ENCODE measurements at regions of chr11 and their contacts with region 1.

Region 1: GRCh38 chr11:13772223-13773046 is 104.0 kb downstream of the FAR1 start:
- DNase-seq: peak; percentile 12 to 68
- H3K4me3 ChIP-seq: no peak overlapping the region
- H3K27ac ChIP-seq: no peak overlapping the region
- H3K4me1 ChIP-seq: no peaks in the 10 kb centered on the region
- H3K27me3 ChIP-seq: no peaks in the 10 kb centered on the region
- CTCF ChIP-seq: peak; percentile 74

Region 2: GRCh38 chr11:13717331-13717730 is 55.1 kb before region 1 on chr11:
- CTCF ChIA-PET with region 1: no interaction called
- POLR2A ChIA-PET with region 1: no interaction called
- intact Hi-C with region 1: no loop called
- DNase-seq: peak; percentile 13 to 37
- H3K4me3 ChIP-seq: no peak overlapping the region
- H3K27ac ChIP-seq: no peak overlapping the region
- H3K4me1 ChIP-seq: no peaks in the 10 kb centered on the region
- H3K27me3 ChIP-seq: no peaks in the 10 kb centered on the region
- CTCF ChIP-seq: no peak

Region 3: GRCh38 chr11:13745165-13745564 is 27.3 kb before region 1 on chr11:
- CTCF ChIA-PET with region 1: interaction called, 12 read pairs
- POLR2A ChIA-PET with region 1: no interaction called
- intact Hi-C with region 1: no loop called
- DNase-seq: no peak
- H3K4me3 ChIP-seq: no peak overlapping the region
- H3K27ac ChIP-seq: no peak overlapping the region
- H3K4me1 ChIP-seq: no peaks in the 10 kb centered on the region
- H3K27me3 ChIP-seq: no peaks in the 10 kb centered on the region
- CTCF ChIP-seq: no peak

Region 4: DNA sequence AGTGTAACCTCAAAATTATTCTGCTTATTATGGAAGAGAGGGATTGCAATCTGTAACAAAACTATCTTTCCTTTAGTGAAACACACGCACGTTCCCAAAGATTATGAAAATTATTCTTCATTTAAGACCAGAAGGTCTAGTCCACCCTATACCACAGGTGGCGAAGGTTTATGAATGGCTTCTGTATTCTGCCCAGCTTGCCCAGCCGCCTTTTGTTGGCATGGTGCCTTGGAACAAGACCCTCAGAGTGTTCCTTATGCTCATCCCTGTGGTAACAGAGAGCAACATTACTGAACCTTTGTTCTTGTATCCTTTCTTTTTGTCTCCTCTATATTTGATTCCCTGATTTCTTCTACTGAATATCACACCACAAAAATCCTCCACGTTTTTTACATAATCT is 12.4 kb after region 1 on chr11:
- CTCF ChIA-PET with region 1: no interaction called
- POLR2A ChIA-PET with region 1: no interaction called
- intact Hi-C with region 1: no loop called
- DNase-seq: no peak
- H3K4me3 ChIP-seq: no peak overlapping the region
- H3K27ac ChIP-seq: no peak overlapping the region
- H3K4me1 ChIP-seq: no peaks in the 10 kb centered on the region
- H3K27me3 ChIP-seq: no peaks in the 10 kb centered on the region
- CTCF ChIP-seq: no peak

Region 5: DNA sequence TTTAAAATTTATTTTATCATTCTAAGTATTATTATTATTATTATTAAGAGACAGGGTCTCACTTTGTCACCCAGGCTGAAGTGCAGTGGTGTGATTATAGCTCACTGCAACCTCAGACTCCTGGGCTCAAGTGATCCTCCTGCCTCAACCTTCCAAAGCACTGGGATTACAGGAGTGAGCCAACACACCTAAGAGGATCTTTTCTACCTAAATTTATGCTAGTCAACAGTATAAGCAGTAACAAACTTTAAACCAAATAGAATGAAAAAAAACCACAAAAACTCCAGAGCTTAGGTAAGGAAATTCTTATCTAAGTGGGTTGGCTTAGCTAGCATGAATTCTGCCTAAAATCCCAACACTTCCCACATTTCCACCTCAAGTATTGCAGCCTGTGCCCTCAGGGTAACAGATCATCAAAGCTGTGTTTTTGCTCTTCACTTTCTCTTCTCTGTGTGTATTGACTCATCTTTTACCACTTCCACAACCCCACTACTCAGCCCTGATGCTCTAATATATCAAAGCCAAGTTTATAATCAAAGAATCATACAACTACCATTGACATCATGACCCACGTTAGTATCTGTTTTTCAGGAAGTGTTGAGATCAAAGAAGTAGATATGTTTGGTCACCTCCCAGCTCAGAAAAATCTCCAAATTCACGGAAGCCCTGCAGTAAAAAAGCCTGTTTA is 96.4 kb after region 1 on chr11:
- CTCF ChIA-PET with region 1: interaction called, 8 read pairs
- POLR2A ChIA-PET with region 1: no interaction called
- intact Hi-C with region 1: loop called (anchors 1 kb)
- DNase-seq: no peak
- H3K4me3 ChIP-seq: no peak overlapping the region
- H3K27ac ChIP-seq: no peak overlapping the region
- H3K4me1 ChIP-seq: peaks cover 18% of the 10 kb centered on the region
- H3K27me3 ChIP-seq: no peaks in the 10 kb centered on the region
- CTCF ChIP-seq: no peak

Region 6: GRCh38 chr11:13923716-13924650 is 151.5 kb after region 1 on chr11:
- CTCF ChIA-PET with region 1: no interaction called
- POLR2A ChIA-PET with region 1: no interaction called
- intact Hi-C with region 1: loop called (anchors 1 kb)
- DNase-seq: peak; percentile 60 to 75
- H3K4me3 ChIP-seq: peak overlapping the region; percentile 21; the same call in 1 of the 2 replicates
- H3K27ac ChIP-seq: peak overlapping the region; percentile 76
- H3K4me1 ChIP-seq: peaks cover 46% of the 10 kb centered on the region
- H3K27me3 ChIP-seq: no peaks in the 10 kb centered on the region
- CTCF ChIP-seq: no peak

Region 7: DNA sequence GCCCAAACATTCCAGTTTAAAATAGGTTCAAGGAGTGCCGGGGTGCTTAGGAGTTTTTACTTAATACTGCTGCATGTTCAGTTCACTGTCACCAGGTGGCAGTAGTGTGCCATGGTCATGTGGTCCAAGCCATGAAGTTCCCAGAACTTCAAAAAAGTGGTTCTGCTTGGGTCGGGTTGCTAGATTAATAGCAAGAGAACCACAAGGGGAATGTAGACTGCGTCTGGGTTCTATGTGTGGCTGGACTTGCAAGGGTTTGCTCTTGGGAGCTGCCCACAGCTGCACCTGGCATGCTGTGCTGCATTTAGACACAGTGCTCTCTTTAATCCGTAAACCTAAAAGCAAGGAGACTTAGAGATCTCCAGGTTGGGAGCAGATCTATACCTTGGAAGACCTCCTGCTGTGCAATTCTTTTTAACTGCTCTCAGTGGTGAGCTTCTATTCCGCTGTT is 183.6 kb after region 1 on chr11:
- CTCF ChIA-PET with region 1: no interaction called
- POLR2A ChIA-PET with region 1: no interaction called
- intact Hi-C with region 1: loop called (anchors 5 kb)
- DNase-seq: peak in 1 of 2 experiments; percentile 19
- H3K4me3 ChIP-seq: no peak overlapping the region
- H3K27ac ChIP-seq: no peak overlapping the region
- H3K4me1 ChIP-seq: no peaks in the 10 kb centered on the region
- H3K27me3 ChIP-seq: no peaks in the 10 kb centered on the region
- CTCF ChIP-seq: peak; percentile 89

Measured in PC-9 (cell line).